Dendritic cell treated with granulocyte-macrophage colony-stimulating factor and Interleukin-4, amounts not matched to agents 40 ng/mL and 50 ng/mL, for 4 days (primary cell): ENCODE measurements at regions of chr1 and their contacts with region 1.

Region 1: DNA sequence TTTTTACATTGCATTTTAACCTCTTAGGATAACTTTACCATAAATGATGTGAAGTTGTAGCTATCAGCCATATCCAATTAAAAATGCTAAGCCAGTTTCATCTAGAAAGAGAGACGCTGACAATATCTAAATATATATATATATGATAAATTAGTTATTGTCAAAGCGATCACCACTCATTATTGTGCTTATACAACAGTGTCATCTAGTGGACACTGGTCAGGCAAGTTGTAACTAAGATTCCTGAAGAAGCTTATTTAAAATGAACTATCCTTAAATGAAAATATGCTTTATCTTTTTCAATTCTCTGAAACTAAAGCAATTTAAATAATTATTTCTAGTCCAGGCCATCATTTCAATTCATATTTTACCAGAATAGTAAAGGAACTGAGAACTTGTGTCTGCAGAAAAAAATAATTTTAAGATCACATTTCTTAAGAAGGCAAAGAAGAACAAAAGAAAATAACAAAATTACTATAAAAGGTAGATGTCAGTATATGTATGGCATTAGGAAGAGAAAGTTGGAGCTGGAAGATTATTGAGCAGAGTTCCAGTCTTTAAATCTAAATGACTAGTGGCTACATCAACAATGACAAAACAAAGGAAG is 193.3 kb upstream of the SNX7 start:
- H3K4me3 Mint-ChIP-seq: no peak overlapping the region
- H3K27ac Mint-ChIP-seq: no peak overlapping the region
- H3K4me1 Mint-ChIP-seq: peaks cover 11% of the 10 kb centered on the region
- H3K27me3 Mint-ChIP-seq: peaks cover 5% of the 10 kb centered on the region

Region 2: GRCh38 chr1:96966536-96967138 is 1501.6 kb before region 1 on chr1:
- intact Hi-C with region 1: loop called (anchors 2 kb)
- H3K4me3 Mint-ChIP-seq: no peak overlapping the region
- H3K27ac Mint-ChIP-seq: no peak overlapping the region
- H3K4me1 Mint-ChIP-seq: no peaks in the 10 kb centered on the region
- H3K27me3 Mint-ChIP-seq: peaks cover 5% of the 10 kb centered on the region

Region 3: DNA sequence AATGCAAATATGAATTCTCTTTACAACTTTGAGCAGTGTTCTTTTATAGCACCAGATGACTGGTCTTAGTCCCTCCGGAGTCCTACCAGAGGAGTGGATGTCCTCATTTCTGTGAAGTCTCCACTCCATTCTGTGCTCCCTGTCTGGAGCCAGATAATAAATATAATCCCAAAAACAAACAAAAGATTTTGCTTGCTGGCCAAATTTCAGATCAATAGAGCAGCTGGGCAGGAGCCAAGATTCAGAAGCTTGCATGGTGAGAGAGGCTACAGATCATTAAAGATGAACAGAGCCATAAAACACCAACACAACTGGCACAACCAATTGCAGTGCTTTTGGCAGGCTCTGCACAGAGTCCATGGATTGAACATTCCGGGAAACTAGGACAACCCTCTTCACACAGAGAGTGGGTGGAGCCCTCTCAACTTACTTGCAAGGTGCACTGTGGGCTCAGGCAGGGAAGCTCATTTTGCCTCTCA is 38.2 kb before region 1 on chr1:
- intact Hi-C with region 1: no loop called
- H3K4me3 Mint-ChIP-seq: no peak overlapping the region
- H3K27ac Mint-ChIP-seq: no peak overlapping the region
- H3K4me1 Mint-ChIP-seq: no peaks in the 10 kb centered on the region
- H3K27me3 Mint-ChIP-seq: no peaks in the 10 kb centered on the region

Region 4: DNA sequence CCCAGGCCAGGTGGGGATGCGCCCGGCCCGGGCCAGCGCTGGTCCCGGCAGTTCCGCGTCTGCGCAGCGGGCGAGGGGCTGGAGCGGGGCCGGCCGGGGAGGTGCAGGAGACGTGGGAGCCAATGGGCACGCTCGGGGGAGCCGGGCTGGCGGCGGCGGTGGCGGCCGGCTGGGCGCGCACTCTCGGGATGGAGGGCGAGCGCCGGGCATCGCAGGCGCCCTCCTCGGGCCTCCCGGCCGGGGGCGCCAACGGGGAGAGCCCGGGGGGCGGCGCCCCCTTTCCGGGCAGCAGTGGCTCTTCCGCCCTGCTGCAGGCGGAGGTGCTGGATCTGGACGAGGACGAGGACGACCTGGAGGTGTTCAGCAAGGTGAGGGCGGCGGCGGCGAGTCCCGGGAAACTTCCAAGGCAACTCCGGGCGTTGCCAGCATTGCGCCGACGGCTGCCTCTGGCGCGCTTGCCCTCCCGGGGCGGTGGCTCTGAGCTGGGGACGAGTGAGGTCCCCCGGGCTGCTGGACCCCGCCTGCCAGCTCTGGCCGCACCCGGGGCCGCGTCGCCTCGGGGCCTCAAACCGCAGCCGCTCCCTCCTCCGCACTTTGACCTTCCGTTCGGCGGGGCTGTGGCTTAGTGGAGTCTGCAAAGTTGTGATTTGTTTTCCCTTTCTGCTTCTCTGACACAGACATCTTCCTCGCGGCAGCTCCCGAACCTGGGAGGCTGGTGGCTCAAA is 193.5 kb after region 1 on chr1 and contains the start of gene SNX7:
- intact Hi-C with region 1: no loop called
- H3K4me3 Mint-ChIP-seq: peak within 1 kb of the TSS; percentile 81
- H3K27ac Mint-ChIP-seq: no peak within 1 kb of the TSS
- H3K4me1 Mint-ChIP-seq: peaks cover 10% of the 10 kb centered on the region
- H3K27me3 Mint-ChIP-seq: peaks cover 51% of the 10 kb centered on the region

Region 5: GRCh38 chr1:98677288-98677687 is 209.1 kb after region 1 on chr1:
- intact Hi-C with region 1: no loop called
- H3K4me3 Mint-ChIP-seq: no peak overlapping the region
- H3K27ac Mint-ChIP-seq: no peak overlapping the region
- H3K4me1 Mint-ChIP-seq: no peaks in the 10 kb centered on the region
- H3K27me3 Mint-ChIP-seq: no peaks in the 10 kb centered on the region